IMR-90 (cell line): ENCODE measurements at regions of chr3 and their contacts with region 1.

Region 1: DNA sequence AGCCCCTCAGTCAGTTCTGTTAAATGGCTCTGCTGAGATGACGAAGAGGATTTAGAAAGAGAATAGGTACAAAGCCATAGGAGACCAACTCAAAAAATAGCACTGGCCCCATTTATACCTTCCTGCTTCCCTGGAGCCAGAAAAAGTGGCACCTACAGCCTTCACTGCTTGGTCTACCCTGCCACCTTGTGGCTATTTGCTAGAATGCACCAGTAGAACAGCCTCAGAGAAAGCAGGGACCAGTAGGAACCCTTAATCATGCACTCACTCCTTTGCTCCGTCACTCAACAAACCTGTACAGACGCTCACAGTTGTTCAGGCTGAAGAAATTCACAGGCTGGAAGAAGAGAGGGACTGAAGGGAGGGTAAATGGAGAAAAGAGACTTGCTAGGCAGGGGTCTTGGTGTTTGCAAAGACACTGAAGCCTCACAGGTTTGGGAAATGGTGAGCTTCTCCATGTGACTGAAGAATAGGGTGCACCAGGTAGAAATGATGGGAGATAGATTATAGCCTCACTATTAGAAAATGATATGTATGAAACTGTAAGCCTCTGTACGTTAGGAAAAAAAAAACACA is 12.1 kb upstream of the RTP2 start:
- DNase-seq: peak; percentile 73
- ATAC-seq: peak; percentile 93
- H3K4me3 ChIP-seq: no peak overlapping the region
- H3K27ac ChIP-seq: no peak overlapping the region
- H3K4me1 ChIP-seq: no peaks in the 10 kb centered on the region
- H3K27me3 ChIP-seq: peaks cover 7% of the 10 kb centered on the region
- CTCF ChIP-seq: peak; percentile 92
- POLR2A ChIP-seq: peak; percentile 43; the same call in 1 of the 2 replicates
- RAD21 ChIP-seq: peak; percentile 99

Region 2: DNA sequence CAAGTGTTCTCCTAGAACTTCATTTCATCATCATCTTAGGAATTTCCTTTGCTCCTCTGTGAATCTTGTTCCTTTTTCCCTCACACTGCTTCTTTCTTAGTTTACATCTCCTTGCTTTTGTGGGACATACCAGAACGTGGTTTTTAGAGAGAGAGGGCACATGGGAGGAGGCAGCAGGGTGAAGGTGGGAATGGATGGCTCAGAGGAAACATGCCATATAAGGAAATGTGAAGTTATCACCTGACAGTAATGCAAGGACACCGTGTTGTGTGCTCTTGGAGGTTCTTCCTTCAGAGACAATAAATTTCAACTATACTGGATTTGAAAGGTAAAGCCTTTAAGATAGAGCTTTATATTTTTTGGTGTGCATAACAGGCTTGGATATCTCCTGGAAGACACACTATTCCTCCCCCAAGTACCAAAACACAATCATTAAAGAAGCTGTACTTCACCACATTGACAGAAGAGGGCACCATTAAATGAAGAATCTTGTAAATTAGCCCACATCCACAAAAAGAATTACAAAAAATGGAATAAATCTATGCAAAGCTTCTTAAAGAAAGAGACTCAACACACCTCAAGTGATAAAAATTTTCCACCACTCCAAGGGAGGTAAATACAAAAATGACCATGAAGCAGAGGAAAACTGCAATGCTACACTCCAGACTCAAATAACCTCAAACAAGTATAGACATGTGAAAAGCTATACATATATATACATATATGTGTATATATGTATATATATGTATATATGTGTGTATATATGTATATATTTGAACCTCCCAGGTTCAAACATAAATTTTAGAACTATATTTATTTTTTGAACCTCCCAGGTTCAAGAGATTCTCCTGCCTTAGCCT is 601.3 kb before region 1 on chr3:
- CTCF ChIA-PET with region 1: no interaction called
- POLR2A ChIA-PET with region 1: no interaction called
- dilution Hi-C with region 1: no loop called
- in situ Hi-C with region 1: no loop called
- intact Hi-C with region 1: loop called (anchors 2 kb)
- DNase-seq: peak; percentile 48
- ATAC-seq: peak; percentile 86
- H3K4me3 ChIP-seq: no peak overlapping the region
- H3K27ac ChIP-seq: no peak overlapping the region
- H3K4me1 ChIP-seq: no peaks in the 10 kb centered on the region
- H3K27me3 ChIP-seq: no peaks in the 10 kb centered on the region
- CTCF ChIP-seq: peak; percentile 57
- POLR2A ChIP-seq: no peak
- RAD21 ChIP-seq: peak; percentile 56

Region 3: GRCh38 chr3:187139126-187139894 is 575.2 kb before region 1 on chr3 and contains the start of gene RPL39L:
- CTCF ChIA-PET with region 1: interaction called, 3 read pairs
- POLR2A ChIA-PET with region 1: no interaction called
- dilution Hi-C with region 1: no loop called
- in situ Hi-C with region 1: no loop called
- intact Hi-C with region 1: loop called (anchors 1 kb)
- DNase-seq: peak; percentile 76
- ATAC-seq: peak; percentile 99
- H3K4me3 ChIP-seq: peak within 1 kb of the TSS; percentile 67
- H3K27ac ChIP-seq: peak within 1 kb of the TSS; percentile 63
- H3K4me1 ChIP-seq: no peaks in the 10 kb centered on the region
- H3K27me3 ChIP-seq: peaks cover 6% of the 10 kb centered on the region
- CTCF ChIP-seq: peak; percentile 89
- POLR2A ChIP-seq: 0 out of 2 replicates have a peak, but pooled peaks have one; percentile 18
- RAD21 ChIP-seq: peak; percentile 45
- total RNA-seq, gene RPL39L: 32.5 and 34.6 TPM in 2 replicates

Region 4: GRCh38 chr3:187628169-187628568 is 86.3 kb before region 1 on chr3:
- CTCF ChIA-PET with region 1: no interaction called
- POLR2A ChIA-PET with region 1: no interaction called
- dilution Hi-C with region 1: no loop called
- in situ Hi-C with region 1: no loop called
- intact Hi-C with region 1: no loop called
- DNase-seq: no peak
- ATAC-seq: no peak
- H3K4me3 ChIP-seq: no peak overlapping the region
- H3K27ac ChIP-seq: no peak overlapping the region
- H3K4me1 ChIP-seq: peaks cover 1% of the 10 kb centered on the region; the same call in 1 of the 2 replicates
- H3K27me3 ChIP-seq: peaks cover 13% of the 10 kb centered on the region
- CTCF ChIP-seq: no peak
- POLR2A ChIP-seq: no peak
- RAD21 ChIP-seq: no peak

Region 5: GRCh38 chr3:188006726-188007393 is 292.4 kb after region 1 on chr3:
- CTCF ChIA-PET with region 1: no interaction called
- POLR2A ChIA-PET with region 1: no interaction called
- dilution Hi-C with region 1: no loop called
- in situ Hi-C with region 1: no loop called
- intact Hi-C with region 1: no loop called
- DNase-seq: no peak
- ATAC-seq: no peak
- H3K4me3 ChIP-seq: no peak overlapping the region
- H3K27ac ChIP-seq: no peak overlapping the region
- H3K4me1 ChIP-seq: no peaks in the 10 kb centered on the region
- H3K27me3 ChIP-seq: no peaks in the 10 kb centered on the region
- CTCF ChIP-seq: no peak
- POLR2A ChIP-seq: no peak
- RAD21 ChIP-seq: no peak

Region 6: GRCh38 chr3:189233225-189233858 is 1518.8 kb after region 1 on chr3:
- CTCF ChIA-PET with region 1: no interaction called
- POLR2A ChIA-PET with region 1: no interaction called
- dilution Hi-C with region 1: no loop called
- in situ Hi-C with region 1: loop called (anchors 25 kb)
- intact Hi-C with region 1: no loop called
- DNase-seq: peak; percentile 53
- ATAC-seq: peak; percentile 90
- H3K4me3 ChIP-seq: no peak overlapping the region
- H3K27ac ChIP-seq: no peak overlapping the region
- H3K4me1 ChIP-seq: no peaks in the 10 kb centered on the region
- H3K27me3 ChIP-seq: peaks cover 13% of the 10 kb centered on the region
- CTCF ChIP-seq: peak; percentile 55
- POLR2A ChIP-seq: no peak
- RAD21 ChIP-seq: peak; percentile 68